Mammary epithelial cell (primary cell): ENCODE measurements at regions of chr6 and their contacts with region 1.

Region 1: GRCh38 chr6:36546920-36547645 is at the start of gene STK38:
- DNase-seq: peak; percentile 81
- H3K4me3 ChIP-seq: peak within 1 kb of the TSS; percentile 96 to 100 (median 99)
- H3K27ac ChIP-seq: peak within 1 kb of the TSS; percentile 80
- H3K4me1 ChIP-seq: peaks cover 3% of the 10 kb centered on the region
- H3K27me3 ChIP-seq: no peaks in the 10 kb centered on the region
- CTCF ChIP-seq: peak in 1 of 2 donors; percentile 36
- total RNA-seq, gene STK38: 23.2 to 29.0 TPM

Region 2: GRCh38 chr6:36487698-36488097 is 59.4 kb before region 1 on chr6:
- CTCF ChIA-PET with region 1: no interaction called
- dilution Hi-C with region 1: loop called (anchors 5 kb)
- in situ Hi-C with region 1: no loop called
- intact Hi-C with region 1: no loop called
- DNase-seq: no peak
- H3K4me3 ChIP-seq: no peak overlapping the region
- H3K27ac ChIP-seq: no peak overlapping the region
- H3K4me1 ChIP-seq: no peaks in the 10 kb centered on the region
- H3K27me3 ChIP-seq: no peaks in the 10 kb centered on the region
- CTCF ChIP-seq: no peak

Region 3: GRCh38 chr6:36576561-36576960 is 29.5 kb after region 1 on chr6:
- CTCF ChIA-PET with region 1: interaction called, 3 read pairs
- dilution Hi-C with region 1: no loop called
- in situ Hi-C with region 1: no loop called
- intact Hi-C with region 1: loop called (anchors 1 kb)
- DNase-seq: no peak
- H3K4me3 ChIP-seq: no peak overlapping the region
- H3K27ac ChIP-seq: peak overlapping the region; percentile 74
- H3K4me1 ChIP-seq: peaks cover 32% of the 10 kb centered on the region
- H3K27me3 ChIP-seq: no peaks in the 10 kb centered on the region
- CTCF ChIP-seq: no peak

Region 4: DNA sequence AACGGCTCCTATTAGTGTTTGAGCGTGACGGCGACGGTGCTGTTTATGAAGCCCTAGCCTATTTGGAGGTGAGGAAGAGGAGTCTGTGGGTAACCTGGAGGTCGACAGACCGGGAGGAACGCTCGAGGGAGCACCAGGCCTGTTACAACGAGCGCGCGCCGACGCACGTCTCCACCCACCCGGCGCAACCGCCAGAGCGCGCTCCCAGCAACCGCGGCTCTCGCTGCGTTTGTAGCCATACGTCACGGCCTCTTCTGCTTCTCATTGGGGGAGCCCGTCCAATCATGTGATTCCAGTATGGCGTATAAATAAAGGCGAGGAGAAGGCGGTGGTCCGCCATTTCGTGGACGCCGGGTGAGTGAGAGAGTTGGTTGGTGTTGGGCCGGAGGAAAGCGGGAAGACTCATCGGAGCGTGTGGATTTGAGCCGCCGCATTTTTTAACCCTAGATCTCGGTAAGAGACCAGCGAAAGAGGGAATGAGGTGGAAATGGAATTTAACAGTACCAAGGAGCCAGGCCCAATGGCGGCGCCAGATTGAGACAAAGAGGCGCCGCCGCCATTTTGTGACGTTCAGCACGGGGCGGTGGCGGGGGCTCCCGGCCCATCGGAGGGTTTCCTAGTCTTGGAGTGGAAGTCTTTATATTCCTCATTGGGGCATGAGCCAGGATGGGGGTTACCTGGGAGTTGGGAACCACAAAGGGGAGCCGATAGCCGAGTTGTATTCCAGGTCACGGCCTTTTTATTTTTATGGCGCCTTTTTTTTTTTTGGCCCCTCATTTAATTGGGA is 47.1 kb after region 1 on chr6 and contains the start of gene SRSF3:
- CTCF ChIA-PET with region 1: no interaction called
- dilution Hi-C with region 1: loop called (anchors 5 kb)
- in situ Hi-C with region 1: loop called (anchors 10 kb)
- intact Hi-C with region 1: loop called (anchors 1 kb)
- DNase-seq: peak; percentile 97
- H3K4me3 ChIP-seq: peak within 1 kb of the TSS; percentile 68 to 99 (median 92)
- H3K27ac ChIP-seq: peak within 1 kb of the TSS; percentile 97
- H3K4me1 ChIP-seq: peaks cover 35% of the 10 kb centered on the region
- H3K27me3 ChIP-seq: no peaks in the 10 kb centered on the region
- CTCF ChIP-seq: peak in 1 of 2 donors; percentile 57
- total RNA-seq, gene SRSF3: 167 to 323 TPM

Region 5: DNA sequence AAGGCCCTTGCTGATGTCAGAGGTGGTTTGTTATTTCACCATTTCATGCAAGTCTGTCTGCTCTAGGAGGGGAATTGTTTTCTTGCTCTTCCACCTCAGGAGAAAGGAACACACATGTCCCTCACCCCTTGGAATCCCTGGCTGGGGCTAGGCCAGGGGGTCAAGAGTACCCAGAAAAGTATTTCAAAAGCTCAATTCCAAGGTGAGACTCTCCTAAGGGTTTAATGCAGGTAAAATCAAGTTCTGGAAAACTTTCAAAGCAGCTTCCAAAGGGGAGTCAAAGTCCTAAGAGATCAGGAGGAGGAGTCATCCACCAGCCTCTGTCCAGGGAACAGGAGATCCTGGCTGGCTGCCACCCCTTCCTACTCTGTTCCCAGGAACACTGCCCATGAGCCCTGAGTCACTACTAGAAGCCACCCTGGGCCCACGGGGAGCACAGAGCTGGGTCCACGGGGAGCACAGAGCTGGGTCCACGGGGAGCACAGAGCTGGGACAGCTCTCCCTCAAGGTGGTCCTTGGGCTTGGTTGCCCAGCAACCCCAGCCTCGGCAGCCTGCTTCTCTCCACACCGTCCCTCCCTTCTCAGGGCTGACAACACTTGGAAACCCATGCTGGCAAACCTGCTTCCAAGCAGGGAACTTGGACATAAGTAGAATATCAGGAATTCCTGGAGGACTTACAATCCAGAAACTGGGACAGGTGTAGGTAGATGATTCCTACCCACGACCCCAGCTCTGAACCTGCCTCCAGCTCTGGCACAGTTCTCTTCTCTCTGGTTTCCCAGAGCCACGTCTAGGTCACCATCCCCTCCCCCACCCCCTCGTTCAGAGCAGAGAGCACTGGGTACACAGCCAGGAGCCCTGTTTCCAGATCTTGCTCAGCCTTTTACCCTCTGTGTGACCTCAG is 96.1 kb after region 1 on chr6:
- CTCF ChIA-PET with region 1: no interaction called
- dilution Hi-C with region 1: no loop called
- in situ Hi-C with region 1: no loop called
- intact Hi-C with region 1: no loop called
- DNase-seq: peak; percentile 77
- H3K4me3 ChIP-seq: no peak overlapping the region
- H3K27ac ChIP-seq: no peak overlapping the region
- H3K4me1 ChIP-seq: peaks cover 21% of the 10 kb centered on the region
- H3K27me3 ChIP-seq: no peaks in the 10 kb centered on the region
- CTCF ChIP-seq: no peak